Left ventricle myocardium inferior (tissue), 1 donor: ENCODE measurements at regions of chr6 and their contacts with region 1.

Region 1: GRCh38 chr6:125956506-125957390 is at the start of gene HINT3:
- DNase-seq: peak; percentile 98
- H3K4me3 ChIP-seq: peak within 1 kb of the TSS; percentile 99
- H3K27ac ChIP-seq: peak within 1 kb of the TSS; percentile 96
- H3K4me1 ChIP-seq: peaks cover 40% of the 10 kb centered on the region
- H3K27me3 ChIP-seq: no peaks in the 10 kb centered on the region
- CTCF ChIP-seq: peak; percentile 99
- total RNA-seq, gene HINT3: 32.9 TPM

Region 2: DNA sequence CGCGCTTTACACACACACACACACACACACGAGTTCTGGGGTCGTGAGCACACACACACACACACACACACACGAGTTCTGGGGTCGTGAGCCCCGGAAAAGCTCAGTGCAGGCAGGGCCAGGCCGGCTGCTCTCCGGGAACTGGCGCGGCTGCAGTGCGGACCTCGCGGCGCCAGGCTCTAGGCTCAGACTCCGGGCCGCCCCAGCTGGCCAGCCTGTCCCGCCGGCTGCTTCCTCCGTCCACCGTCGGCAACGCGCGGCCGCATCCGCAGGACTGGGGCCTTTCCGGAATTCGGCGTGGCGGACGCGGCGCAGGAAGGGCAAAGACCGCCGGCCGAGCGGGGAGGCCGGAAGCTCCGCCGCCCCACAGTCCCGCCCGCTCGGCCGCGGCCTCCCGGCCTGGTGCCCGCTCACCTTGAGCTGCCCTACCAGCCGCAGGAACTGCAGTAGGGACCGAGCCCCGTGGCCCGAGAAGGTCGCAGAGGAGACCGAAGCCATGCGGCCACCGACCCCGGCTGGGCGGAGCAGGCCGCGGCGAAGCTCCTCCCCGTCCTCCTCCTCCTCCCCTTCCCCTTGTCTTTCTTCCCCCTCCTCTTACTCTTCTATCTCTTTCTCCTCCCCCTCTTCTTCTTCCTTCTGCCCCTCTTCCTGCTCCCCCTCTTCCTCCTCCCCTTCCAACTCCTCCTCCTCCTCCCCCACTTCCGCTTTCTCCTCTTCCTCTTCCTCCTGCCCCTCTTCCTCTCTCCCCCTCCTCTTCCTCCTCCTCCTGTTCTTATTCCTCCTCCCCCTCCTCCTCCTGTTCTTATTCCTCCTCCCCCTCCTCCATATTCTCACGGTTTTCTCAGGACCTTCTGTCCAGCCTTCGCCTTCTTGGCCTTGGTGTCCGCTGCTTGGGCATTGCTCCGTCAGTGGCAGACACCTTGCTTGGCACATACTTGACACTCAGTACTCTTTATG is 655.0 kb before region 1 on chr6 and contains the start of gene HDDC2:
- intact Hi-C with region 1: loop called (anchors 10 kb)
- DNase-seq: peak; percentile 83
- H3K4me3 ChIP-seq: peak within 1 kb of the TSS; percentile 78
- H3K27ac ChIP-seq: peak within 1 kb of the TSS; percentile 94
- H3K4me1 ChIP-seq: peaks cover 43% of the 10 kb centered on the region
- H3K27me3 ChIP-seq: no peaks in the 10 kb centered on the region
- CTCF ChIP-seq: peak; percentile 8
- total RNA-seq, gene HDDC2: 87.9 TPM

Region 3: DNA sequence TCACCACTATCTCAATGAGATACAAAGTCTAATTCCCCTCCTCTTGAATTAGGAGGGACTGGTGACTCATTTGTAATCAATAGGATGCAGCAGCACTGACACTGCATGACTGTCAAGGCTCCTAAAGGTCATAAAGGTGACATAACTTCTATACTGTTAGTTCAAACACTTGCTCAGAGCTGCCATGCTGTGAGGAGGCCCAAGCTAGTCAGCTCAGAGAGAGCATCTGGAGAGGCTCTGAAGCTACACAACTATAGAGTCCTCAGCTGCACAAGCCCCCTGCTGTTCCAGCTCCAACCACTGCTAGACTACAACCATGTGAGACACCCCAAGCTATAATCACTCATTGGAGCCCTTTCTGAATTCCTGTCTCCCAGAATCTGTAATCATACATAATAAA is 224.3 kb before region 1 on chr6:
- intact Hi-C with region 1: no loop called
- DNase-seq: no peak
- H3K4me3 ChIP-seq: no peak overlapping the region
- H3K27ac ChIP-seq: no peak overlapping the region
- H3K4me1 ChIP-seq: no peaks in the 10 kb centered on the region
- H3K27me3 ChIP-seq: no peaks in the 10 kb centered on the region
- CTCF ChIP-seq: no peak

Region 4: DNA sequence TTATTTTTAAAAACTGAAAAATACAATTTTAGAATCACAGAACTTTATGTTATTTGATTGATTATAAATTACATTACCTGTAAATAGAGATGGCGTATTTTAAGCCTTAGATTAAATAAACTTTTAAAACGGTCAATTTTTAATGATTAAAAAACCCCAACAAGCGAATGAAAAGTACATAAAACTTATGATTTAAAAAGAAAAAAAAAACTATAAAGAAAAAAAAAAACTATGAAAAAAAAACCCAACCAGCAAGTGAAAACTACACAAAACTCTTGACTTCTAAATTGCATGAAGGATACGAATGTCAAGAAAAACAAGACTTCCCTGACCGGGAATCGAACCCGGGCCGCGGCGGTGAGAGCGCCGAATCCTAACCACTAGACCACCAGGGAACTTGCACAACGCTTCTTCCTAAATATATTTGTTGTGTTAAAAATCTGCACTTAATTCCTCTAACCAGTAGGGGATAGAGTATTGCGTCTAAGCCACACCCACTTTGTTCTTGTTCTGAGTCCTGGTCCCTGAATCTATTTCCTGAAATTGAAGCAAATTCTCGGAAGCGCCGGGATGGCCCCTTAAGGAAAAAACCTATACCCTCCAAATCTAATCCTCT is 176.7 kb before region 1 on chr6:
- intact Hi-C with region 1: loop called (anchors 5 kb)
- DNase-seq: peak; percentile 79
- H3K4me3 ChIP-seq: peak overlapping the region; percentile 73
- H3K27ac ChIP-seq: peak overlapping the region; percentile 95
- H3K4me1 ChIP-seq: peaks cover 13% of the 10 kb centered on the region
- H3K27me3 ChIP-seq: no peaks in the 10 kb centered on the region
- CTCF ChIP-seq: peak; percentile 56

Region 5: DNA sequence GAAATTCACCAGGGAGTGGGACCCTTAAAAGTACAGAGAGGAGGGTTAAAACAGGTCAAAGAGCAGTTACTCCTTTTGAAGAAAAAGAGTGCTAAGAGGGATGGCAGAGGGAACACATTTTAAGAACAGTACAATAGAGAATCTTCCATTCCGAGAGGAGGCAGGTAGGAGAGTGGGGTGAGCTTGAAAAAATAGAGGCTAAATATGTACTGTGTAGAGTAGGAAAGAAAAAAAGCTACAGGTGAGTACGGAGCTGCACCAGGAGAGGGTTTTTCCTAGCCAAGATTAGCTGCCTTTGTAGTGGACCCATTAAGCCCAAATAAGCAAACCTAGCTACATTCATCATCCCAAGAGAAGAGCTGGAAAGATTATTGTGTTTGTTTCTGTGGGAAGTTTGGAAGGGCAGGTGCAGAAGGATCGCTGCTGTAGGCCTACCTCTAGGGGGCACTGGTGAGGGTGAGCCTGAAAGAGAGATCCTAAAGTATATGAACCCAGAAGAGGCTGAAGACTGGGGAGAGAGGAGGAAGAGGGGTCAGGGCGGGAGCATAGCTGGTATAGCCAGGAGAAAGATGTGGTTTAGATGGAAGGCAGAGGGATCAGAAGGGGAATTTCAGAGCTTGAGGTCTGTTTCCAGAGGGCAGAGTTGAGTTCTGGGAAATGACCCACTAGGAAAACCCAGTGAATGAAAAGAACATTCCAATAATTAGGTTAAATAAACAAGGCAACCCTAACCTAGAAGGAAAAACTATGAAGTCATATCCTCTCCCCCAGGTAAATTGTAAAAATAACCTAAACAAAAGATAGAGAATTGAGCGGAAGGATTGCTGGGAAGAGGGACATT is 50.4 kb before region 1 on chr6:
- intact Hi-C with region 1: loop called (anchors 5 kb)
- DNase-seq: no peak
- H3K4me3 ChIP-seq: no peak overlapping the region
- H3K27ac ChIP-seq: no peak overlapping the region
- H3K4me1 ChIP-seq: no peaks in the 10 kb centered on the region
- H3K27me3 ChIP-seq: no peaks in the 10 kb centered on the region
- CTCF ChIP-seq: peak; percentile 65